CD4-positive, alpha-beta memory T cell (primary cell): ENCODE measurements at regions of chr6 and their contacts with region 1.

Region 1: DNA sequence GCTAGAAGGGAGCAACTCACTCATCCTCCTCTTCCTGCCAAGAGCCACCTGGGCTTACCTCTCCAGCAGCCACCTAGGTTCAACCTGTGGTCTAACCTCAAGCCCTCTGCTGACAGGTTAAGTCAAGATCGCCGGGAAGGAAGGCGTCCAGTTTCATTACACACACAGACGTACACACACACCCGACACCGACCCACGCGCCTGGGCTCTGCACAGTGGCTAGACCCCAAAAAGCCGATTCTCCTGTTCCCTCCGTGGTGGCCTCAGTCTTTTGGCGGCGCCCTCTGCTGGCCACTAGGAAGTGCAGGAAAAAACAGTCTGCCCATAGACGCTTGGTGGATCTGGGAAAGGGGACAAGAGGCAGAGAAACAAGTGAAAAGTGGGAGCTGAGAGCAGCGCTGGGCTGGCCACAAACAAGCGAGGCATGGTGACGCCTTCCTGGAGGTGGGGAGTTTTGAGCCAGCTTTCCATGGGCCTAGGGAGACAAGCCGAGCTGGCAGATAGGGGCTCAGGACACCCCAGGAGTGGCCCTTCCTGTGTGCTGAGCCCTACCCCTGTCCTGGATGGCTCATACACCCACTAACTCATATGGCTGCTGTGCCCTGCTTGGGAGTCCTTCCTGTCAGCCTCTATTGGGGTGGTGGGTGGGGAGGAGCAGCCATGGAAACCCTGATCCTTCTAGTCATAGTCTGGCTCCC is 52.7 kb downstream of the MRPL14 start:
- DNase-seq: peak; percentile 60 to 68 (median 63)
- H3K4me3 ChIP-seq: peak overlapping the region in 1 of 2 donors; percentile 14
- H3K4me3 Mint-ChIP-seq: peak overlapping the region; percentile 71 to 91 (median 88)
- H3K27ac ChIP-seq: no peak overlapping the region
- H3K27ac Mint-ChIP-seq: peak overlapping the region in 5 of 7 donors; percentile 20 to 58 (median 43)
- H3K4me1 ChIP-seq: peaks cover 20% of the 10 kb centered on the region
- H3K4me1 Mint-ChIP-seq: peaks cover 15 to 26% (median 18%) of the 10 kb centered on the region in 4 donors
- H3K27me3 ChIP-seq: no peaks in the 10 kb centered on the region
- H3K27me3 Mint-ChIP-seq: peaks cover 10 to 13% of the 10 kb centered on the region in 2 donors

Region 2: DNA sequence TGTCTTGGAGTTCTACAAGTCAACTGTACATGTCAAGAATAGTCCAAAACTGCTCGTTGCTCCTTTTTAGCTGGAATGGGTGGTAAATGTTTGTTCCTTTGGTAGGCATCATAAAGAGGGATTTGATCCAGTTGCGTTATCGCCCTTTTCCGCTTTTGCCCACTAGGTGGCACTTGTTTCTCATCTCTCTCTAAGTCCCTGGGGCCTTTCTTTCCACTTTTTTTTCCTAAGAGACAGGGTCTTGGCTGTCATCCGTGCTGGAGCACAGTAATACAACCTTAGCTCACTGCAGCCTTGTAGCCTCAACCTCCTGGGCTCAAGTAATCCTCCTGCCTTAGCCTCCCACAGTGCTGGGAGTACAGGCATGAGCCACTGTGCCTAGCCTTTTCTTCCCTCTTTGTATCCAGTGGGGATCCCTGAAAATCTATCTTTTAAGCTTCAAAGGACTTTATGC is 466.3 kb before region 1 on chr6:
- CTCF ChIA-PET with region 1: interaction called, 10 read pairs
- POLR2A ChIA-PET with region 1: no interaction called
- intact Hi-C with region 1: loop called (anchors 1 kb)
- DNase-seq: peak; percentile 36 to 60 (median 49)
- H3K4me3 ChIP-seq: no peak overlapping the region
- H3K4me3 Mint-ChIP-seq: no peak overlapping the region
- H3K27ac ChIP-seq: no peak overlapping the region
- H3K27ac Mint-ChIP-seq: peak overlapping the region in 6 of 7 donors; percentile 1 to 78 (median 26)
- H3K4me1 ChIP-seq: no peaks in the 10 kb centered on the region
- H3K4me1 Mint-ChIP-seq: peaks cover 3 to 7% (median 6%) of the 10 kb centered on the region in 4 donors
- H3K27me3 ChIP-seq: no peaks in the 10 kb centered on the region
- H3K27me3 Mint-ChIP-seq: no peaks in the 10 kb centered on the region

Region 3: DNA sequence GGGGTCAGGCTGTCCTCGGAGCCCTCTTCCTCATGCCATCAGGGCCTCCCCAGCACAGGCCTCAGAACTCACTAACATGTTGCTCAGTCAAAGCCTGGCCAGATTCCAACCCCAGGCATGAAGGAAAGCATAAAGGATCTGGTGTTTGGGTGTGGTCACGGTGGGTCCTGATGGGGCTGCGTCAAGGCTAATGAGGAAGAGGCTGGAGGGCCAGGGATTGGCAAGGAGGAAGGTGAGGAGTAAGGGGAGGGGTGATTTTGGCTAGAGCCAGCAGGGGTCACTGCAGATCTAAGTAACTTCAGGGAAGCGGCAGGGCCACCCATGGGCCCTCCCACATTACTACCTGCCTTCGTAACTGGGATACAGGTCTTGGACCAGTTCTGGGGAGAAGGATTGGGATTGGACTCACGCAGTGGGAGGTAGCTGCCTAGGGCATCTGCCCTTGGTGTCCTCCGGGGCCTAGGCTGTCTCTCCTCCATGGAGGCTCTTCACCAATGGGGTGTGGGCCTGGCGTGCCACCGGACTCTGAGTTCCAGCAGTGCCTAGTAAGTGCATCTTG is 350.8 kb before region 1 on chr6:
- CTCF ChIA-PET with region 1: interaction called, 48 read pairs
- POLR2A ChIA-PET with region 1: interaction called, 3 read pairs
- intact Hi-C with region 1: loop called (anchors 1 kb)
- DNase-seq: peak; percentile 59 to 72 (median 62)
- H3K4me3 ChIP-seq: no peak overlapping the region
- H3K4me3 Mint-ChIP-seq: peak overlapping the region in 1 of 8 donors; percentile 17
- H3K27ac ChIP-seq: no peak overlapping the region
- H3K27ac Mint-ChIP-seq: peak overlapping the region in 6 of 7 donors; percentile 1 to 92 (median 38)
- H3K4me1 ChIP-seq: peaks cover 28% of the 10 kb centered on the region
- H3K4me1 Mint-ChIP-seq: peaks cover 18 to 45% (median 29%) of the 10 kb centered on the region in 4 donors
- H3K27me3 ChIP-seq: no peaks in the 10 kb centered on the region
- H3K27me3 Mint-ChIP-seq: no peaks in the 10 kb centered on the region

Region 4: DNA sequence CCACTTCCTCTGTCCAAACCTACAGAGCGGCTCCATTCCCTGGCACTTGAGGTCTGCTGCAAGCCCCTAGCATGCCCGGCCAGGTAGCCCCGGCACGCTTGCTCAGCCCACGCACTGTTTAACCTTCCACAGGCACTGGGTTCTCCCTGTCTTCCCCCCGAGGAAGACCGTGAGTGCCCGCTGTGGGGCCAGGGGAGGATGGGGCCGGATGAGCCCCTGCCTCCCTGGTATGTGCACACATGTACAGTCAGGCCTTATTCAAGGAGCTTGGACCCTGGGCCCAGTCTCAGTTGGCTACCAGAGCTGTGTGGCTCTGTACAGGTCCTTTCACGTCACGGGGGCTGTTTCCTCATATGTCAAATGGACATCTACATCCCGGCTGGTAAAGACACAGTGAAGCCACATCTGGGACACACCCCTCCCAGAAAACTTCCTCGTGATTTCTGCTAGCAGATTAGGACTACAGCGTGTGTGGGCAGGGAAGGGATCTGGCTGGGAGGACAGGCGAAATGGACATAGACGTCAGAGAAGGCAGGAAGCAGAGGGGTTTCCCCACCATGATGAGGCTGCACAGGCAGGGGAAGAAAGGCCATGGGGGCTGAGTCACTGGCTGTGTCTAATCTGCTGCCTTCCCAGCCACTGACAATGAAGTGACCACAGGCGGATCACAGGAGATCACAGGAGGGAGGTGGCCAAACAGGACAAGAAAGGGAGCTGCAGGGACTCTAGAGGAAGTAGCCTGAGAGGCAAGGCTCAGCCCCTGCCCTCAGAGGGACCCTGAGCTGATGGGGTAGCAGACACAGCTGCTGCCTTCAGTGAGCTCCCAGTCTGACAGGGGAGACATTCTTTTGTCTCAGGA is 10.3 kb before region 1 on chr6:
- CTCF ChIA-PET with region 1: interaction called, 16 read pairs
- POLR2A ChIA-PET with region 1: interaction called, 3 read pairs
- intact Hi-C with region 1: no loop called
- DNase-seq: no peak
- H3K4me3 ChIP-seq: no peak overlapping the region
- H3K4me3 Mint-ChIP-seq: no peak overlapping the region
- H3K27ac ChIP-seq: no peak overlapping the region
- H3K27ac Mint-ChIP-seq: no peak overlapping the region
- H3K4me1 ChIP-seq: no peaks in the 10 kb centered on the region
- H3K4me1 Mint-ChIP-seq: no peaks in the 10 kb centered on the region
- H3K27me3 ChIP-seq: no peaks in the 10 kb centered on the region
- H3K27me3 Mint-ChIP-seq: peaks cover 2 to 5% of the 10 kb centered on the region in 2 donors

Region 5: GRCh38 chr6:44090465-44090864 is 15.9 kb after region 1 on chr6:
- CTCF ChIA-PET with region 1: interaction called, 16 read pairs
- POLR2A ChIA-PET with region 1: interaction called, 3 read pairs
- intact Hi-C with region 1: no loop called
- DNase-seq: no peak
- H3K4me3 ChIP-seq: no peak overlapping the region
- H3K4me3 Mint-ChIP-seq: no peak overlapping the region
- H3K27ac ChIP-seq: no peak overlapping the region
- H3K27ac Mint-ChIP-seq: no peak overlapping the region
- H3K4me1 ChIP-seq: no peaks in the 10 kb centered on the region
- H3K4me1 Mint-ChIP-seq: no peaks in the 10 kb centered on the region
- H3K27me3 ChIP-seq: no peaks in the 10 kb centered on the region
- H3K27me3 Mint-ChIP-seq: no peaks in the 10 kb centered on the region

Region 6: GRCh38 chr6:44177678-44178423 is 103.3 kb after region 1 on chr6:
- CTCF ChIA-PET with region 1: no interaction called
- POLR2A ChIA-PET with region 1: no interaction called
- intact Hi-C with region 1: no loop called
- DNase-seq: no peak
- H3K4me3 ChIP-seq: no peak overlapping the region
- H3K4me3 Mint-ChIP-seq: no peak overlapping the region
- H3K27ac ChIP-seq: no peak overlapping the region
- H3K27ac Mint-ChIP-seq: peak overlapping the region in 2 of 7 donors; percentile 15 to 33
- H3K4me1 ChIP-seq: peaks cover 9% of the 10 kb centered on the region
- H3K4me1 Mint-ChIP-seq: peaks cover 0 to 5% (median 2%) of the 10 kb centered on the region in 4 donors
- H3K27me3 ChIP-seq: no peaks in the 10 kb centered on the region
- H3K27me3 Mint-ChIP-seq: peaks cover 0 to 2% of the 10 kb centered on the region in 2 donors